SK-N-SH (cell line): ENCODE measurements at regions of chr1 and their contacts with region 1.

Region 1: GRCh38 chr1:207404849-207405525 is 49.1 kb upstream of the CR2 start:
- DNase-seq: peak; percentile 52
- H3K4me3 ChIP-seq: no peak overlapping the region; a peak in 1 of 4 replicates
- H3K27ac ChIP-seq: no peak overlapping the region
- H3K4me1 ChIP-seq: no peaks in the 10 kb centered on the region
- H3K27me3 ChIP-seq: peaks cover 32% of the 10 kb centered on the region; the same call in 1 of the 2 replicates
- CTCF ChIP-seq: peak; percentile 93
- EP300 ChIP-seq: no peak
- RAD21 ChIP-seq: peak; percentile 76

Region 2: GRCh38 chr1:207428236-207428635 is 23.2 kb after region 1 on chr1:
- CTCF ChIA-PET with region 1: interaction called, 10 read pairs
- POLR2A ChIA-PET with region 1: no interaction called
- DNase-seq: no peak
- H3K4me3 ChIP-seq: no peak overlapping the region
- H3K27ac ChIP-seq: no peak overlapping the region
- H3K4me1 ChIP-seq: no peaks in the 10 kb centered on the region
- H3K27me3 ChIP-seq: peaks cover 19% of the 10 kb centered on the region
- CTCF ChIP-seq: no peak
- EP300 ChIP-seq: no peak
- RAD21 ChIP-seq: no peak